ENCODE measurements at regions of chr2 and their contacts with region 1.

Region 1: GRCh38 chr2:25521665-25522387 is 151.6 kb downstream of the DTNB start:
- DNase-seq: peak; percentile 49
- H3K4me3 ChIP-seq: no peak overlapping the region
- H3K27ac ChIP-seq: no peak overlapping the region
- H3K4me1 ChIP-seq: no peaks in the 10 kb centered on the region
- H3K27me3 ChIP-seq: no peaks in the 10 kb centered on the region
- CTCF ChIP-seq: peak; percentile 81 to 86

Region 2: GRCh38 chr2:25243995-25244394 is 277.8 kb before region 1 on chr2:
- CTCF ChIA-PET with region 1: no interaction called
- dilution Hi-C with region 1: no loop called
- in situ Hi-C with region 1: no loop called
- intact Hi-C with region 1: loop called (anchors 10 kb)
- DNase-seq: no peak
- H3K4me3 ChIP-seq: no peak overlapping the region
- H3K27ac ChIP-seq: no peak overlapping the region
- H3K4me1 ChIP-seq: no peaks in the 10 kb centered on the region
- H3K27me3 ChIP-seq: no peaks in the 10 kb centered on the region
- CTCF ChIP-seq: no peak

Region 3: GRCh38 chr2:25362049-25362433 is 159.8 kb before region 1 on chr2:
- CTCF ChIA-PET with region 1: interaction called, 4 read pairs
- dilution Hi-C with region 1: no loop called
- in situ Hi-C with region 1: no loop called
- intact Hi-C with region 1: loop called (anchors 5 kb)
- DNase-seq: peak; percentile 77
- H3K4me3 ChIP-seq: peak overlapping the region; percentile 11 to 38 (median 15)
- H3K27ac ChIP-seq: no peak overlapping the region
- H3K4me1 ChIP-seq: peaks cover 18% of the 10 kb centered on the region
- H3K27me3 ChIP-seq: no peaks in the 10 kb centered on the region
- CTCF ChIP-seq: peak; percentile 90 to 91

Region 4: GRCh38 chr2:25444608-25445270 is 77.1 kb before region 1 on chr2:
- CTCF ChIA-PET with region 1: no interaction called
- dilution Hi-C with region 1: no loop called
- in situ Hi-C with region 1: no loop called
- intact Hi-C with region 1: no loop called
- DNase-seq: no peak
- H3K4me3 ChIP-seq: no peak overlapping the region
- H3K27ac ChIP-seq: no peak overlapping the region
- H3K4me1 ChIP-seq: no peaks in the 10 kb centered on the region
- H3K27me3 ChIP-seq: no peaks in the 10 kb centered on the region
- CTCF ChIP-seq: no peak

Region 5: DNA sequence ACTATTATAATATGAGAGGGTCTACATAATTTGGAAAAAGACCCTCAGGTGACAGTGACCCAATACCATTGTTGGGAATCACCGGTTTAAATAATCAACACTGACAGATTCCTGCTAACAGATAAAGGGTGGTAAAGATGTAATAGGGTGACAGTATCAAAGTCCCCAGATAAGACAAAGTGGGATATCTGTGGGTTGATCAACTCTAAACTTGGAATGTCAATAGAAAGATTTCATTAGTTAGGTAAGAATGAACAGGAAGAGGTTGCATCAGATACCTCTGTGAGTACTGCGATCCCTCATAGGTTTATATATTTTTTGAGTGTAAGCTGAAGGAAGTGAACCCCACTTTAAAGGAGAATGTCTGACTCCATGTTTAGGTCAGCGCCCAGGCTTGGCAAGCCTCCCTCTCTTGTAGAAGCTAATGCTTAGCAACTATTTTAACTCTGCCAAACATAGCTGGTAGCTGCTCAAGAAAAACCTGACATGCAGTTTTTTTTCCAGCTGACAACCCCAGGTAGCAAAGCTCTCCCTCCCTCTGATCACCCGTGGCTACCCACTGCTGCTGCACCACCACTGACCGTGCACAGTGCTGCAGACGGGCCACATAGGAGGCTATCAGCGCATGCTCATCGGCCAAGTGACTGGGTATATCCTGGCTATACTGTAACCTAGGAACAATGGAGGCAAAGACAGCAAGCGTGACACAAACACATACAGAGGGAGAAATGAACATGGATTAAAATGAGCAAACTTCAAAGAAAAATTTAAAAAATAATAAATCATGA is 66.8 kb before region 1 on chr2:
- CTCF ChIA-PET with region 1: no interaction called
- dilution Hi-C with region 1: no loop called
- in situ Hi-C with region 1: no loop called
- intact Hi-C with region 1: no loop called
- DNase-seq: no peak
- H3K4me3 ChIP-seq: no peak overlapping the region
- H3K27ac ChIP-seq: no peak overlapping the region
- H3K4me1 ChIP-seq: no peaks in the 10 kb centered on the region
- H3K27me3 ChIP-seq: no peaks in the 10 kb centered on the region
- CTCF ChIP-seq: no peak

Measured in mammary epithelial cell (primary cell).